ENCODE measurements at regions of chr10 and their contacts with region 1.

Region 1: DNA sequence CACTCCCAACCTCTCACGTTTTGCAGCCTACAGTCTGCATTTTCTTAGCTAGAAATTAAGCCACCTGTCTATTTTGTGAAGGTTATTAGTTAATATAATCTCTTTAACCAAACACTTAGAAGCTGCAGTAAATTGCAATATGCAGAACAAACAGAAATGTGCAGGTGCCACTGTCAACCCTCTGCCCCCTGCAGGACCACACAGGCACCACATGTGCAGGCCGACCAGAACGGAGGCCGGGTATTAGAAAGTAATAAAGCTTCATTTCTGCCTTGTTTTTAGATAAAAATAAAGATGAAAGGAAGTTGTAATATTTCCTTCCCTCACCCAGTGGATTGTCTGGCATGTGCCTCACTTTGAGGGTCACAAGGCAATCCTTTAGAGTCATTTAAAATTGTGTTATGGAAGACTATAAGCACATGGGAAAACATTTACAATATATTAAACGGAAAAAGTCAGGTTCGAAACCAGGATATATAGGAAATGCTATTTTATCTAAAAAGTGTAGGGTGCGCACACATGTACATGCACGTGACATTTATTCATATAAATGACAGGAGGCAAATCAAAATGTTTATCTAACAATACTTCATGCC is 158.2 kb downstream of the ARHGAP12 start:
- DNase-seq: peak; percentile 46
- ATAC-seq: peak; percentile 73
- H3K4me3 ChIP-seq: no peak overlapping the region
- H3K27ac ChIP-seq: no peak overlapping the region
- H3K4me1 ChIP-seq: peaks cover 11% of the 10 kb centered on the region; the same call in 1 of the 2 replicates
- H3K27me3 ChIP-seq: no peaks in the 10 kb centered on the region
- CTCF ChIP-seq: peak; percentile 81

Region 2: DNA sequence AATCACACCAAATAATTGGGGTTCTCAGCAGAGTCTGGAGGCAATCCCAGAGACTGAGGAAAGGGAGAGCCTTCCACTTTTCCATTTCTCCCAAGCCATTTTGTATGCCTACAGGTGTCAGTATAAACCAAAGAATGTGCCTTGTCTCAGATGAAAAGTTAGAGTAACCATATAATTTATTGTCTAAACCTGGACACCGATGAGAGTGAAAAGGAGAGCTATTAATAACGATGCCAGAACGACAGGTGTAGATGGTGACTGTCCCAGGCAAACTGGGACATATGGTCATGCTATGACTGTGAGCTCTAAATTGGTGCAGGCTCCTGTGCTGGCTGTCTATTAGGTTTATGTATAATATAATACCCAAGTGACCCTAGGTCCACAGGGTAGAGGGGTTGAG is 61.4 kb before region 1 on chr10:
- CTCF ChIA-PET with region 1: no interaction called
- POLR2A ChIA-PET with region 1: no interaction called
- intact Hi-C with region 1: loop called (anchors 1 kb)
- DNase-seq: peak; percentile 41
- ATAC-seq: peak; percentile 65
- H3K4me3 ChIP-seq: no peak overlapping the region
- H3K27ac ChIP-seq: no peak overlapping the region
- H3K4me1 ChIP-seq: peaks cover 7% of the 10 kb centered on the region; the same call in 1 of the 2 replicates
- H3K27me3 ChIP-seq: no peaks in the 10 kb centered on the region
- CTCF ChIP-seq: peak; percentile 49

Region 3: DNA sequence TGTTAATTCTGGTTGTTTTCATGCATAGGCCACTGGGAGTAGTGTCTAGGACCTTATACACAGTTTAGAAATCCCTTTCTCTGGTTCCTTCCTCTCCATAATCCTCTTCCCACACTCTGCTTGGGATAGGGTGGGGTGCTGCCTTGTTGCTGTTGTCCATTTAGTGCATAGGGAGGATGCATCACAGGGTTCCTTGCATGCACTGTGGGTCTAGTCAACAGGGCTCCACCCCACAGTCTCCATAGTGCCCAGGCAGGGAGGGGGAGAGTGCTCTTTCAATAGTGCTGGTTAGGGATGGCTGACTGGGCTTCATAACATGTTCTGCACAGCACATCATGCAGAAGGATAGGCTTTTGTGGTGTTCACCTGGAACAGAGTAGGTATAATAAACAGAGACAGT is 77.1 kb after region 1 on chr10:
- CTCF ChIA-PET with region 1: no interaction called
- POLR2A ChIA-PET with region 1: no interaction called
- intact Hi-C with region 1: no loop called
- DNase-seq: no peak
- ATAC-seq: no peak
- H3K4me3 ChIP-seq: no peak overlapping the region
- H3K27ac ChIP-seq: no peak overlapping the region
- H3K4me1 ChIP-seq: no peaks in the 10 kb centered on the region
- H3K27me3 ChIP-seq: no peaks in the 10 kb centered on the region
- CTCF ChIP-seq: no peak

Region 4: DNA sequence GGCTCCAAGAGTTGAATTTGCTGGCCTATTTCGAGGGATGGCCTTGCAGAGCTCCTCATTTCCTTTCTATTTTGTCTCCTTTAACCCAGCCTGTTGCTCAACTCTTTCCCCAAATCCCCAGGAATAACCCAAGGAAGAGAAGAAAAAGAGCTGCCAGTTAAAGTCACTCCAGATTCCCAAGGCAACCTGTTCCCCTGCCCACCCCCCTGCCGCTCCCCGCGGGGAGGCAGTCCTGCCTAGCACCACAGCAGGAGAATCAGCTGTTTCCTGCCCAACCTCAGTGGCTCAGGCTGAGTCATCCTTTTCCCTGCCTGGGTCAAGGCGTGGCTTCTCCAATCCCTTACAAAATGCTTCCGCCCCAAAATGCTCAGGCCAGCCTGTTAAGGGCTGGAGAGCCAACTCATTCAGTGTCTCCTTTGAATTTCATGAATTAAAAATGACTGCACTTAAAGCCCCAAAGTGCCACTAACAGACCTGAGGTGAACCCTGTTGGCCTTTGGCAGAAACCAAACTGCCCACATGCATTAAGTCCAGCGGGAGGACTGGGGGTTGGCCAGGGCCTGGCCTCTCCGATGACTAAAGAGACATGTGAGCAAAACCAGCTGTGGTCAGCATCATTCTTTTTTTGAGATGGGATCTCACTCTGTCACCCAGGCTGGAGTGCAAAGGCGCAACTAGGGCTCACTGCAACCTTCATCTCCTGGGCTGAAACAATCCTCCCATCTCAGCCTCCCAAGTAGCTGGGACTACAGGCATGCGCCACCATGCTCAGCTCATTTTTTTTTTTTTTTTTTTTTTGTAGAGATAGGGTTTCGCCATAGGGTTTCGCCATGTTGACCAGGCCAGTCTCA is 369.0 kb after region 1 on chr10:
- CTCF ChIA-PET with region 1: interaction called, 11 read pairs
- POLR2A ChIA-PET with region 1: no interaction called
- intact Hi-C with region 1: no loop called
- DNase-seq: peak; percentile 92
- ATAC-seq: peak; percentile 100
- H3K4me3 ChIP-seq: peak overlapping the region; percentile 33; the same call in 1 of the 2 replicates
- H3K27ac ChIP-seq: peak overlapping the region; percentile 85
- H3K4me1 ChIP-seq: peaks cover 16% of the 10 kb centered on the region
- H3K27me3 ChIP-seq: no peaks in the 10 kb centered on the region
- CTCF ChIP-seq: no peak; the same call in 1 of the 2 replicates